Activated naive CD4-positive, alpha-beta T cell treated with anti-CD3 and anti-CD28 coated beads for 36 hours (primary cell): ENCODE measurements at regions of chr11 and their contacts with region 1.

Region 1: DNA sequence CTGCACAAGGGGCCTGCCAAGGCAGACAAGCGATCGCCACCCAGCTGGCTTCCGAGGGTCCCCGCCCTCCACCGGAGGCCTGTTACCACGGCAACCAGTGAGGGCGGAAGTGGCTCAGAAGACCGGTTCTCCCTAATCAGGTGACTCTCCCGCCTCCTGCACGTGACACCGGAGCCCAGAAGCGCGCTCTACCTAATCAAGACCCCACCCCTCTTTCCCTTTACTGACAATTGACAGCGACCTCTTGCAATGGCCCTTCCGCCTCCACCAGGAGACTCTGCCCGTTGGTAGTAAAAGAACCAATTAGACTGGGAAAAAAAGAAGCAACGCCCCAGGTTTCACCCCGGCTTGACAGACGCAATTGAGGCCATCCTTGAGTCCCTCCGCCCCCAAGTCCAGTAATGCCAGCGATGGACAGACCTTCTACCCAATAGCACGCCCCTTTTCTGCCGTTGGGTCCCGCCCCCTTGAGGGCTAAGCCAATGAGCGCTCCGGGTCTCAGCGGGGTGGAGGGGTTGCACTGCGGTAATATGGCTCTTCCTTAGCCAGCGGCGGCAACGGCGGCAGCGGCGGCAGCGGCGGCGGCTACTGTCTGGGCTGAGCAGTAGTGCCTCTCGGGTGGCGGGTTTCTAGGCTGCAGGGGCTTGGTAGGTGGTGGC is at the start of gene UVRAG:
- DNase-seq: peak; percentile 99
- H3K4me3 Mint-ChIP-seq: no peak within 1 kb of the TSS
- H3K27ac Mint-ChIP-seq: peak within 1 kb of the TSS; percentile 90
- H3K4me1 Mint-ChIP-seq: peaks cover 19% of the 10 kb centered on the region
- H3K27me3 Mint-ChIP-seq: no peaks in the 10 kb centered on the region
- total RNA-seq, gene UVRAG: 15.9 to 18.3 TPM

Region 2: DNA sequence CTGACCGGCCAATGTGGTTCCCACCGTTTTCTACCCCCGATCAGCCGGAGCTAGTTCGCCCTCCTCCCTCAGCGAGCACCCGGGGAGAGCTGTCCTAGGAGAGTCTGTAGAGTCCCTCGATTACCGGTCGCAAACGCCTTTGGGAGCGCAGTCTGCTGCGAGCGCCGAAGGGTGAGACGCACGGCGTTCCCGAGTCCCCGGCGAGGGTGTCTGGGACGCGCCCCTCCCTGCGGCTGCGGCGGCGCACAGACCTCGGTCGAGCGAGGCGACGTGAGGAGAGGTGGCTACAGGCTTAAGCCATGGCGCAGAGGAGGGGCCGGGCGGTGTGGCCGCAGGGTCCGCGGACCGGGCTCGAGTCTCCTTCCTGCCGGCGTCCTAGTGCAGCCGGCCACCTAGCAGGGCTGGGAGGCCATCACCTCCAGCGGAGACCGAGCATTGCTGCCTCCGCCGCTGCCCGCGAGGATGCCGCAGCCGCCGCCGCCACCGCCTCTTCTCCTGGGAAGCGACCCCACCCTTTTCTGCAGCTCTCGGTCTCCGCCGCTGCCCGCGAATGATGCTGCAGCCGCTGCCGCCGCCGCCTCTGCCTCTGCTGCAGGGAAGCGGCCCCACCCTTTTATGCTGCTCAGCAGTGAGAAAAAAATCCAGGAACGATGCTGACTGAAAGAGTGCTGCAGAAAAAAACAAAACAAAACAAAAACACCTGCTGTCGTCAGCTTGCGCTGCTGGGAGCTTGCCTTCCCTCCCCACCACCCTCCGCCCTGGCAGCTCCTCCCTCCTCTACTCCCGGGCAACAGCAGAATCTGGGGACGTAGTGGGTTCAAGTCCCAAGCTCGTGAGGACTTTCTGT is 146.1 kb before region 1 on chr11 and contains the start of gene MAP6:
- CTCF ChIA-PET with region 1: no interaction called
- intact Hi-C with region 1: loop called (anchors 1 kb)
- DNase-seq: peak; percentile 38
- H3K4me3 Mint-ChIP-seq: peak within 1 kb of the TSS; percentile 76
- H3K27ac Mint-ChIP-seq: no peak within 1 kb of the TSS
- H3K4me1 Mint-ChIP-seq: peaks cover 6% of the 10 kb centered on the region
- H3K27me3 Mint-ChIP-seq: peaks cover 67% of the 10 kb centered on the region
- total RNA-seq, gene MAP6: not detected

Region 3: GRCh38 chr11:75773595-75774353 is 41.0 kb before region 1 on chr11:
- CTCF ChIA-PET with region 1: no interaction called
- intact Hi-C with region 1: loop called (anchors 1 kb)
- DNase-seq: peak; percentile 77
- H3K4me3 Mint-ChIP-seq: no peak overlapping the region
- H3K27ac Mint-ChIP-seq: peak overlapping the region; percentile 22
- H3K4me1 Mint-ChIP-seq: peaks cover 23% of the 10 kb centered on the region
- H3K27me3 Mint-ChIP-seq: peaks cover 4% of the 10 kb centered on the region

Region 4: DNA sequence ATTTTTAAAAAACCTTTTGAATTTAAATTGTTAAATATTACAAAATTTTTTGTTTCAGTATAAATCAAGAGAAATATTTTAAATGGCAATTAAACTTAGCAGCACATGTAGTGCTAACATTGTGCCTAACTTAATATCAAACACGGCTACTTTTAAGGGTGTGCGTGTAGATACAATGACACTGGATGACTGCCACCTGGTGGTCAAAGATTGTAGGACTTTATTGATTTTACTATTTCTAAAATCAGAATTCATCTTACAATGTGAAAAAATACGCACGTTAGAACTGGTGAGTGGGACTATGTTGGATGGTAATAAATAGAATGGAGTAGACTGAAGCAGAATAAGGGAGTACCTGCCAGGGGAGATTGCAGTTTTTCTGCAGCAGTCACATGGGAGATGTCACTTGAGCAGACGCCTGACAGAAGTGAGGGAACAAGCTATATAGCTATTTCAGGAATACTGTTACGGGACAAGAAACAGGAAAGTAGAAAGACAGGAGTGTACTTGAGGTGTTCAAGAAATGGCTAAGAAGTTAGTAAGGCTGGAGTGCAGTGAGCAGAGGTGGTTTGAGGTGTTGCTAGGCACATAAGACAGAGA is 53.1 kb after region 1 on chr11:
- CTCF ChIA-PET with region 1: interaction called, 5 read pairs
- intact Hi-C with region 1: loop called (anchors 1 kb)
- DNase-seq: peak; percentile 61
- H3K4me3 Mint-ChIP-seq: no peak overlapping the region
- H3K27ac Mint-ChIP-seq: no peak overlapping the region
- H3K4me1 Mint-ChIP-seq: peaks cover 8% of the 10 kb centered on the region
- H3K27me3 Mint-ChIP-seq: no peaks in the 10 kb centered on the region

Region 5: GRCh38 chr11:76380967-76381719 is 566.3 kb after region 1 on chr11 and contains the starts of genes GVQW3 and THAP12:
- CTCF ChIA-PET with region 1: no interaction called
- intact Hi-C with region 1: loop called (anchors 2 kb)
- DNase-seq: peak; percentile 97
- H3K4me3 Mint-ChIP-seq: peak within 1 kb of the TSS; percentile 91
- H3K27ac Mint-ChIP-seq: peak within 1 kb of the TSS; percentile 91
- H3K4me1 Mint-ChIP-seq: peaks cover 58% of the 10 kb centered on the region
- H3K27me3 Mint-ChIP-seq: no peaks in the 10 kb centered on the region
- total RNA-seq, gene GVQW3: 1.7 to 2.1 TPM
- total RNA-seq, gene THAP12: 39.4 to 40.6 TPM